CD4-positive, alpha-beta T cell (primary cell): ENCODE measurements at regions of chr15 and their contacts with region 1.

Region 1: DNA sequence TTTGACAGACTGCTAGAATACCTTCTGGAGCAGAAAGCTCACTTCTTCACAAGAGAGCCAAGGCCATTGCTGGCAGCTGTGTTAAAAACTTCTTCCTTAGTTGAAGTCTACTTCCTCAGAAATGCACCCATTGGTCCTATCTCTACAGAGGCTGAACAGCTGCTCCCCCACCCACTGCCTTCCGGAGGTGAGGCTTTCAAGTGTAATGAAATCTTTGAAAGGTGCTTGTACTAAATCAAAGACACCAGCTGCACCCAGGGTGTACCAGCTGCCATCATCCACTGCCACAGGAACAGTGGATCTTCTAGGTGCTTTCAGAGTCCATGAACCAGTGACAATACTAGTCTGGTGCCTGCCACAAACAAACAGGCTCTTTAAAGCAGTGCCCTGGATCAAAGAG is 26.4 kb upstream of the HERC1 start:
- DNase-seq: peak; percentile 51 to 83 (median 69)
- ATAC-seq: peak; percentile 95
- H3K4me3 ChIP-seq: no peak overlapping the region
- H3K4me3 Mint-ChIP-seq: peak overlapping the region; percentile 59
- H3K27ac ChIP-seq: peak overlapping the region; percentile 58 to 64
- H3K27ac Mint-ChIP-seq: peak overlapping the region; percentile 98
- H3K4me1 ChIP-seq: peaks cover 32% of the 10 kb centered on the region
- H3K4me1 Mint-ChIP-seq: peaks cover 79% of the 10 kb centered on the region
- H3K27me3 ChIP-seq: no peaks in the 10 kb centered on the region
- H3K27me3 Mint-ChIP-seq: no peaks in the 10 kb centered on the region
- CTCF ChIP-seq: no peak

Region 2: GRCh38 chr15:63818191-63818590 is 42.0 kb before region 1 on chr15:
- CTCF ChIA-PET with region 1: no interaction called
- POLR2A ChIA-PET with region 1: interaction called, 10 read pairs
- intact Hi-C with region 1: no loop called
- DNase-seq: peak in 4 of 14 experiments; percentile 14 to 36 (median 26)
- ATAC-seq: peak; percentile 64
- H3K4me3 ChIP-seq: no peak overlapping the region
- H3K4me3 Mint-ChIP-seq: peak overlapping the region; percentile 28
- H3K27ac ChIP-seq: no peak overlapping the region
- H3K27ac Mint-ChIP-seq: no peak overlapping the region
- H3K4me1 ChIP-seq: peaks cover 20% of the 10 kb centered on the region
- H3K4me1 Mint-ChIP-seq: peaks cover 87% of the 10 kb centered on the region
- H3K27me3 ChIP-seq: no peaks in the 10 kb centered on the region
- H3K27me3 Mint-ChIP-seq: no peaks in the 10 kb centered on the region
- CTCF ChIP-seq: no peak

Region 3: GRCh38 chr15:63848499-63849214 is 11.5 kb before region 1 on chr15:
- CTCF ChIA-PET with region 1: interaction called, 7 read pairs
- POLR2A ChIA-PET with region 1: interaction called, 38 read pairs
- intact Hi-C with region 1: loop called in 1 of 2 experiments (anchors 2 kb)
- DNase-seq: no peak
- ATAC-seq: no peak
- H3K4me3 ChIP-seq: no peak overlapping the region
- H3K4me3 Mint-ChIP-seq: no peak overlapping the region
- H3K27ac ChIP-seq: no peak overlapping the region
- H3K27ac Mint-ChIP-seq: peak overlapping the region; percentile 30
- H3K4me1 ChIP-seq: no peaks in the 10 kb centered on the region
- H3K4me1 Mint-ChIP-seq: peaks cover 25% of the 10 kb centered on the region
- H3K27me3 ChIP-seq: no peaks in the 10 kb centered on the region
- H3K27me3 Mint-ChIP-seq: no peaks in the 10 kb centered on the region
- CTCF ChIP-seq: no peak

Region 4: GRCh38 chr15:63915873-63916771 is 56.0 kb after region 1 on chr15:
- CTCF ChIA-PET with region 1: no interaction called
- POLR2A ChIA-PET with region 1: no interaction called
- intact Hi-C with region 1: no loop called
- DNase-seq: no peak
- ATAC-seq: peak; percentile 37
- H3K4me3 ChIP-seq: no peak overlapping the region
- H3K4me3 Mint-ChIP-seq: no peak overlapping the region
- H3K27ac ChIP-seq: no peak overlapping the region
- H3K27ac Mint-ChIP-seq: no peak overlapping the region
- H3K4me1 ChIP-seq: peaks cover 16% of the 10 kb centered on the region
- H3K4me1 Mint-ChIP-seq: peaks cover 15% of the 10 kb centered on the region
- H3K27me3 ChIP-seq: no peaks in the 10 kb centered on the region
- H3K27me3 Mint-ChIP-seq: no peaks in the 10 kb centered on the region
- CTCF ChIP-seq: no peak

Region 5: GRCh38 chr15:64478863-64479262 is 618.7 kb after region 1 on chr15:
- CTCF ChIA-PET with region 1: no interaction called
- POLR2A ChIA-PET with region 1: no interaction called
- intact Hi-C with region 1: no loop called
- DNase-seq: no peak
- ATAC-seq: no peak
- H3K4me3 ChIP-seq: no peak overlapping the region
- H3K4me3 Mint-ChIP-seq: no peak overlapping the region
- H3K27ac ChIP-seq: no peak overlapping the region
- H3K27ac Mint-ChIP-seq: peak overlapping the region; percentile 12
- H3K4me1 ChIP-seq: peaks cover 7% of the 10 kb centered on the region
- H3K4me1 Mint-ChIP-seq: peaks cover 53% of the 10 kb centered on the region
- H3K27me3 ChIP-seq: no peaks in the 10 kb centered on the region
- H3K27me3 Mint-ChIP-seq: no peaks in the 10 kb centered on the region
- CTCF ChIP-seq: no peak